Adrenal gland (tissue), 19 donors: ENCODE measurements at regions of chr9 and their contacts with region 1.

Region 1: GRCh38 chr9:36102742-36103495 is 33.6 kb upstream of the GLIPR2 start:
- DNase-seq: peak; percentile 80 to 95 (median 81)
- H3K4me3 ChIP-seq: no peak overlapping the region
- H3K27ac ChIP-seq: peak overlapping the region in 2 of 5 donors; percentile 31 to 50
- H3K4me1 ChIP-seq: no peaks in the 10 kb centered on the region
- H3K27me3 ChIP-seq: no peaks in the 10 kb centered on the region
- CTCF ChIP-seq: peak; percentile 69 to 88 (median 77)
- POLR2A ChIP-seq: no peak

Region 2: DNA sequence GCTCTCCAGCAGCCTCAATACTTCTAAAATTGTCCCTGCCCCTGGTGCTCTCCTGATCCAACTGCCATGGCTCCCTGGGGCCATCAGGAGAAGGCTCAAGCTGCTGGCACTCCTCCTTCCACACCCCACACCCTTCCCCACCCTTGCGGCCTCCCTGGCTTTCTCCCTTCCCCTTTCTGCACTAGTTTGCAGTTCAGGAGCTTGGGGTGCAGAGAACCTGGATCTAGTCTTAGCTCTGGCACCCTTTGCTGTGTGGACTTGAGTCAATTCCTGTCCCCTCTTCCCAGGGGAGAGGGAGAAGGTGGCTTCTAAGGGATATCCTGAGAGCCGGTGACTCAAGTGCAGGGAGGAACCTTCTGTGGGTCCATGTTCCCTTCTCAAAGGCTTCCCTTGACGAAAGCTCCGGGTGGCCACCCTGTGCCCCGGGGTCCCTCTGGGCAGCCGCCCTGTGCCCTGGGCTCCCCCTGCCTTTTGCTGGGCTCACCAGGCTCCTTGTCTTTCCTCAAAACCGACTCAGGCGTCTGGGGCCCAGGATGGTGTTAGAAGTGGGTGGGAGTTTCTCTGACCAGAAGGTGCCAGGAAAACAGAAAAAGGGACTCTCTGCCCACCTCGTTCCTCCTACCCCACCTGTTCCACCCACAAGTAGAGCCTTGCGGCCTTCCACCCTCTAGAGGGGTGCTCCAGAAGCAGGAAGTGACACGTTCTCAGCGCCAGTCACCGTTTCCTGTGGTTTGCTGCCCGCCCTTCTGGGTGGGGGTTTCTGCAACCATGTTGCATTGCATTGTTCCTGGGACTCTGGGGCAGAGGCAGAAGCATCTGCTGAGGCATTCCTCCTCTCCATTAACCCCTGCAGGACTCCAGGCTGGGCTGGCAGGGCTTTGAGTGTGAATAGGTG is 48.6 kb after region 1 on chr9:
- intact Hi-C with region 1: no loop called
- DNase-seq: peak in 6 of 7 donors; percentile 47 to 74 (median 58)
- H3K4me3 ChIP-seq: no peak overlapping the region
- H3K27ac ChIP-seq: peak overlapping the region in 2 of 5 donors; percentile 47 to 75
- H3K4me1 ChIP-seq: peaks cover 15 to 41% of the 10 kb centered on the region in 2 donors
- H3K27me3 ChIP-seq: no peaks in the 10 kb centered on the region
- CTCF ChIP-seq: no peak
- POLR2A ChIP-seq: no peak

Region 3: DNA sequence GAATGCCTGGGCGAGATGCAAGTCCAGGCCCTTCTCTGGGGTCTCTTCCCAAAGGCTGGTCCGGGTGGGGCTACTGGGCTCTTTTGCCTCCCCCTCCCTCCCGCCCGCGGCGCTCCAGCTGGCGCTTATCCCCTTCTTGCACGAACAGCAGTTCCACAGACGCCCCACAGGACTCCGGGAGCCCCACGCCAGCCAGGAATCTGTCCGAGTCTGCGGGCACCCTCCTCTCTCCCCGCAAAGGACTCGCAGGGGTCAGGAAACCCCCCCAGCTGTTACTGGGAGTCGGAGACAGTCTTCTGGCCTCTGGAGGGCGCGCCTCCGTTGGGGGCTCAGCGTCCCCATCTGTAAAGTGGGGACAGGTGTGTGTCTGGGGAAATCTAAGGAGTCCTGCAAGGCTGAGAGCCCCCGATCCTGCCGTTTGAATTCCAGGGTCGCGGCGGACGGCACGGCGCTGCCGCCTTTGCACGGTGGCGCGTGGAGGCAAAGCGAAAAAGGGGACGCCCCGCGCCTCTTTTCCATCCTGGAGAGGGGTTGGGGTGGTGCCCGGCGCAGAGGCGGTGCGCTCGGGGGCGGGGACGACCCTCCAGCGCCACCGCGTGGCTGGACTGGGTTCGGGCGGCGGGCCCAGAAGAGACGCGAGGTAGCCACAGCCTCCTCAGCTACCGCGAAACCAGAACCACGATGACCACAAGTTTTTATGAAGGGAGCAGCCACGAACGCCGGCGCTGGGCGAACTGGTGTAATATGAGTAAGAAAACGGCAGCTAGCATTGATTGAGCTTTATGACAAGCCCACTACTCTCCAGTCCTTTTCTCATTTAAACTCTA is 63.4 kb after region 1 on chr9:
- intact Hi-C with region 1: loop called in 1 of 2 experiments (anchors 2 kb)
- DNase-seq: peak; percentile 75 to 90 (median 85)
- H3K4me3 ChIP-seq: peak overlapping the region in 3 of 4 donors; percentile 1 to 59 (median 34)
- H3K27ac ChIP-seq: peak overlapping the region in 2 of 5 donors; percentile 41 to 90
- H3K4me1 ChIP-seq: peaks cover 11 to 22% of the 10 kb centered on the region in 2 donors
- H3K27me3 ChIP-seq: no peaks in the 10 kb centered on the region
- CTCF ChIP-seq: peak; percentile 88 to 97 (median 92)
- POLR2A ChIP-seq: no peak